ENCODE measurements at regions of chr6 and their contacts with region 1.

Region 1: GRCh38 chr6:44642870-44643529 is 255.5 kb downstream of the CDC5L start:
- DNase-seq: peak; percentile 85
- ATAC-seq: peak; percentile 87
- H3K4me3 Mint-ChIP-seq: peak overlapping the region; percentile 21
- H3K27ac Mint-ChIP-seq: peak overlapping the region; percentile 93
- H3K4me1 Mint-ChIP-seq: peaks cover 38% of the 10 kb centered on the region
- H3K27me3 Mint-ChIP-seq: peaks cover 2% of the 10 kb centered on the region

Region 2: DNA sequence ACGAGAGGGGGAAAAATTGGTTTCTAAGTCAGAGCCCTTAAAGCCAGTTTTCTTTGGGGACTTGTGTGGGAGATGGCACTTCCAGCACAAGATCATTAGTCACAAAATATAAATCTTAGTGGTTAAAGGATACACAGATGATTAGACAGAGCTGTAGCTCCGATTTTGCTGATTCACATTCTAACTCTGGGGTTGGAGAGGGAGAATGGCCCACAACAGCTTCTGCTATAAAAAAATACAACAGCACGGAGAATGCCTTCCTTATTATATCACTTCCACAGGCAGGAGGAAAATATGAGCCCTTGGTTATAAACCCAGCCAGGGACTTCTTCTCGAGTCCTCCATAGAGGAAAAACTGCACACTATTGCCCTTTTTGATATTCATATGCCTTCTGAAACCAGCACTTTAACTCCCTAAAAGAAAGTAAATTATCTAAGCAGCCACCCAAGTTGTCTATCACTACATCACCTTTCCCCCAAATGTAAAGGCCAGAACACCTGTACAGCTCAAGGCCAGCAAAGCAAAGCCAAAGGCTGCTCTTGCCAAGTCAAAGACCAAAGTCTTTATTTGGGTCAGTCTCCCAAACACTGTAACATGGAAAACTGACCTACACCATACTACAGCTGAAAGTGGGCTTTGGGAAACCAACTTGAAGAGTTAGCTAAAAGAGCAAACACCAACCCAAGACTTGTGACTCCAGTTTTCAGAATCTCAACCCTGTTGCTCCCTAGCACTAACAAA is 526.2 kb before region 1 on chr6:
- CTCF ChIA-PET with region 1: no interaction called
- POLR2A ChIA-PET with region 1: no interaction called
- intact Hi-C with region 1: no loop called
- DNase-seq: no peak
- ATAC-seq: peak; percentile 57
- H3K4me3 Mint-ChIP-seq: no peak overlapping the region
- H3K27ac Mint-ChIP-seq: no peak overlapping the region
- H3K4me1 Mint-ChIP-seq: peaks cover 41% of the 10 kb centered on the region
- H3K27me3 Mint-ChIP-seq: no peaks in the 10 kb centered on the region

Region 3: DNA sequence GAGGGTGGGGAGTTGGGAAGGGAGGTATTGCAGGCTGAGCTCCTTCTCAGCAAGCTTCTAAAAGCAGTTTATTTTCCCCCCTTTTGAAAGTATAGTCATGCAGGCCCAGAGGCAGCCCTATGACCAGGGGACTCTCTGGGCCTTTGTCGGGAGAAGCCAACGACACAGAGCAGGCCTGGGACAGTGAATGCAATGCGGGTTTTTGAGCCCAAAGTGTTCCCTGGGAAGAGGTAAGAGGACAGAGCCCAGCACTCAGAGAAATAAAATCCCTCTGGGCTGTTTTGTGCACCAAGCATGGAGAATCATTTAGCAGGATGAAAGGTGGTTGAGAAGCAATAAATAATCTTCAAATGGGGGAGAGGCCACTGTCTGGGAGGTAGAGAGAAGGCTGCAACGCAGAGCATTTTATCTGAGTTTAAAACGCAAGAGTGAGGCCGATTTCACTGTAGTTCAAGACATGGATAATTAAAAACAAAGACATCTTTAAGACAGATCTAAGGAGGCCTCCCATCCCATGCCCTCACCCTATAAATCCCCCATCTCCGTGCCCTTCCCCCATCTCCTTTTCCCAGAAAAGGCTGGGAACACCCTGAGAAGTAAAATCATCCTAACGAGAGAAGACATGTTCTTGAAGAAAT is 17.9 kb before region 1 on chr6:
- CTCF ChIA-PET with region 1: no interaction called
- POLR2A ChIA-PET with region 1: no interaction called
- intact Hi-C with region 1: no loop called
- DNase-seq: no peak
- ATAC-seq: no peak
- H3K4me3 Mint-ChIP-seq: no peak overlapping the region
- H3K27ac Mint-ChIP-seq: no peak overlapping the region
- H3K4me1 Mint-ChIP-seq: peaks cover 11% of the 10 kb centered on the region
- H3K27me3 Mint-ChIP-seq: no peaks in the 10 kb centered on the region

Region 4: DNA sequence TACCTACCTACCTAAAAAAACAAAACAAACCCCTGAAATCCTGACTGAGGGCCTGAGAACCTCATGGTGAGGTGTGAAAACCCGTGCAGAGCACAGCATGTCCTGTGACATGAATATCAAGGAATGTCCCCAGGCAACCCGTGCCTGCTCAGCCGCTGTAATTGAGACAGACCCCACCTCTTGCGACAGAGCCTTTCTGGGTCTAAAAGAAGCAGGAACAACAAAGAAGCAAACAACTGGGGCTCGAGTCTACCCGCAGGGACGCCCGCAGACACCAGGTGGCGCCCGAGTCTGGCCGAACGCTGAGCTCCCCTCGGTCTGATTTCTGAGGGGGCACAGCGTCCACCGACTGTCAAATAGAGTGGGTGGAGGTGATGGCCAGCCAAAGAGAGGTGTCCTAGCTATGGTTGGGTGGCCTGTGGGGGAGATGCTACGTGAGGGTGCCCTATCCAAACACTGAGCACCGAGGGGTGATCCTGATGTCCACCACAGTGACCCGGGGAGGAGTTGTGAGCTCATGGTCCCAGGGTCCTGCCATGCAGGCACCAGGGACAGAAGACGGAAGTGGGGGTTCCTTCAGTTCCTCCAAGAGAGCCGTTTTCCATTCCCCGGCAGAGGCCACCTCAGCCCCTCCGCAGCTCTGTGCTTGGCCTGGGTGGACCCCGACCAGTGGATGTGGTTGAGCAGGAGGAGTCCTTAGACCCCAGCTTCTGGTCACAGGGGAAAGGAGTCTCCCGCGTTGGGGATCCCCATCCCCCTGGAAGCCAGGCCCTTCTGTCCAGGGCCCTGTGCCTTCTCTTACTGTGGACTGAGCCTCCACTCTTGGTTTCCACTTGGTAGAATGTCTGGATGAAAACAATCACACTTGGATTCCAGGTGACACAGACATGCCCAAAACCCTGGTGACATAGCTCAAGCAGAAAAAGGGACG is 12.7 kb after region 1 on chr6:
- CTCF ChIA-PET with region 1: interaction called, 13 read pairs
- POLR2A ChIA-PET with region 1: no interaction called
- intact Hi-C with region 1: no loop called
- DNase-seq: peak; percentile 85
- ATAC-seq: peak; percentile 77
- H3K4me3 Mint-ChIP-seq: no peak overlapping the region
- H3K27ac Mint-ChIP-seq: peak overlapping the region; percentile 75
- H3K4me1 Mint-ChIP-seq: peaks cover 13% of the 10 kb centered on the region
- H3K27me3 Mint-ChIP-seq: peaks cover 4% of the 10 kb centered on the region

Region 5: DNA sequence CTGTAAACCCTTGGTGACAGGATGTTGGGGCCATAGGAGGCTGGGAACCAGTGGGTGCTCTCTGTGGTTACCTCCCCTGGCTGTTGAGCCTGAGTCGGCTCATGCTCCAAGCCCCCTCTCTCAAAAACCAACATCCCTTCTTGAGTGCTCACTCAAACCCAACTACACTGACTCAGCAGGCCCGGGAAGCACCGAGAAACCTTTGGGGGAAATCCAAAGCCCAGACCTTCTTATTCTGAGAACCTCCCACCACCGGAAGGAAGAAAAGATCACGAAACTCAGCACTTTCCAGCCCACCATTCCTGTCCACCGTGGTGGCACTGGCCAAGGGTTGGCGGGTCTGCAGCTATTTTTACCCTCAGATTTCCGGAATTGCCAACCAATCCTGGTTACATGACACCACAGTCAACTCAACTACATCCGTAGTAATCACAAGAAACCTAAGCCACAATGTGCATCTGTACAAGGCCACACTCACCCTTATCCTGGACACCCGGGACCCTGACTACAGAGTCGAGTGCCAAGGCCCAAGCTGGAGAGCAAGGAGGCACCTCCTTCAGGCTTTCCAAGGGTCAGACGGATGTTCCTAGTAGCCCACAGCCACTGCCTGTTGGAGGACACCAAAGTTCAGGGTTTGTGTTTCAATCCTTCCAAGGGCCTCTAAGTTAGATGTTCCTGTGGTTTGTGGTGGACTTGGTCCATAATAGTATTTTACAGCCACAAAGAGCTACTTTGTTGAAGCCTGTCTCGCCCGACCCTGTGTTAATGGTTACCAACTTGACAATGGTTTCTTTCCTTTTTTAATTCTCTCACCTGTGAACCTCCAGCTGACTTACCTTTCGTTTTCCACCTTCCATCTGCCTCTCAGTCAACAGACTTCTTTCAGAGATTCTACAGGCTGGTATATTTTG is 61.5 kb after region 1 on chr6:
- CTCF ChIA-PET with region 1: no interaction called
- POLR2A ChIA-PET with region 1: no interaction called
- intact Hi-C with region 1: no loop called
- DNase-seq: peak; percentile 67
- ATAC-seq: peak; percentile 72
- H3K4me3 Mint-ChIP-seq: no peak overlapping the region
- H3K27ac Mint-ChIP-seq: peak overlapping the region; percentile 63
- H3K4me1 Mint-ChIP-seq: peaks cover 34% of the 10 kb centered on the region
- H3K27me3 Mint-ChIP-seq: no peaks in the 10 kb centered on the region